Dorsolateral prefrontal cortex (tissue), 120 donors: ENCODE measurements at regions of chr19 and their contacts with region 1.

Region 1: DNA sequence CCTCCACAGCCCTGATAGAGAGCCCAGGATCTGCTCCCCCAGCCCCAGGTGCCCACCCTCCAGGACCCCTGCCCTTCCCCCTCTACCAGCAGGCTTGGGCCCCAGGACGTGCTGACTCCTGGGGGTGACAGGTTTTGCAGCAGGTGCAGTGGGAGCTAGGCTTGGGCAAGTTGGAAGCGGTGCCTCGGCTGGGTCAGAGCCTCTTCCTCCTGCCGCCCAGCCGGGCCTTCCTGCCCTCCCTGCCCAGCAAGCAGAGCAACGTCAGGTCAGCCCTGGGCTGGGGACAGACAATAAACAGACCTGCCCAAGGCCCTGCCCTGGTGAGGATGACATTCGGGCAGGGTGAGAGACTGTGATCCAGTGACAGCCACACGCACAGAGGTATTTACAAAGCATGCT is 9.2 kb upstream of the NCCRP1 start:
- DNase-seq: no peak
- H3K4me3 ChIP-seq: no peak overlapping the region
- H3K27ac ChIP-seq: no peak overlapping the region
- H3K27me3 ChIP-seq: no peaks in the 10 kb centered on the region
- CTCF ChIP-seq: peak in 14 of 56 donors; percentile 0 to 40 (median 8)

Region 2: DNA sequence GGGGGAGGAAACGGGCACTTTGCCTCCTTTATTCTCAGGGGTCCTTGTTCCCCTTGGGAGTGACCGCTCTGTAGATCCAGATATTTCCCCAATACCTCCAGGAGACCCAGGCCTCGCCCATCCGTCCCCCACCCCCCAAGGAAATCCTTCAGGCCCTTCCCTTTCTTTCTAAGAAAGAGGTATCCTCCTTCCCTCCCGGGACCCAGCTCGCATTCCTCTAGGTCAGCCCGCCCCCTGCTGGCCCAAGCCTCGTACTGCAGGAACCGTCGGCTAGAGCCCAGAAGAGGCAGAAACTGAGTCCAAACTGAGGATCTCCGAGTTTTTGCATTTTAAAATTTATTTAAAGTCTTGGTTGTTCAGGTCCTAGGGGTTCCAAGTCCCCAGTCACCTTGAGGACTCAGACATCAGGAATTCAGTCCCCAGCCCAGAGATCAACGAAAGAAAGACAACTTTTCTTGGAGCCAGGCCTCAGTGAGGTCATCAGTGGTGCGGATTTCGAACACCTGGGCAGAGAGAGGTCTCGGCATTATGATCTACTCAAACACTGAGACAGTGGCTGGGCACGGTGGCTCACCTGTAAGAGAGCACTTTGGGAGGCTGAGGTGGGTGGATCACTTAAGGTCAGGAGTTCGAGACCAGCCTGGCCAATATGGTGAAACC is 140.6 kb after region 1 on chr19:
- intact Hi-C with region 1: loop called in 1 of 2 experiments (anchors 5 kb)
- DNase-seq: peak; percentile 82 to 94 (median 91)
- H3K4me3 ChIP-seq: peak overlapping the region in 2 of 59 donors; percentile 1 to 11
- H3K27ac ChIP-seq: peak overlapping the region in 3 of 59 donors; percentile 12 to 53 (median 28)
- H3K27me3 ChIP-seq: no peaks in the 10 kb centered on the region
- CTCF ChIP-seq: peak; percentile 77 to 99 (median 96)